IMR-90 (cell line): ENCODE measurements at regions of chr1 and their contacts with region 1.

Region 1: DNA sequence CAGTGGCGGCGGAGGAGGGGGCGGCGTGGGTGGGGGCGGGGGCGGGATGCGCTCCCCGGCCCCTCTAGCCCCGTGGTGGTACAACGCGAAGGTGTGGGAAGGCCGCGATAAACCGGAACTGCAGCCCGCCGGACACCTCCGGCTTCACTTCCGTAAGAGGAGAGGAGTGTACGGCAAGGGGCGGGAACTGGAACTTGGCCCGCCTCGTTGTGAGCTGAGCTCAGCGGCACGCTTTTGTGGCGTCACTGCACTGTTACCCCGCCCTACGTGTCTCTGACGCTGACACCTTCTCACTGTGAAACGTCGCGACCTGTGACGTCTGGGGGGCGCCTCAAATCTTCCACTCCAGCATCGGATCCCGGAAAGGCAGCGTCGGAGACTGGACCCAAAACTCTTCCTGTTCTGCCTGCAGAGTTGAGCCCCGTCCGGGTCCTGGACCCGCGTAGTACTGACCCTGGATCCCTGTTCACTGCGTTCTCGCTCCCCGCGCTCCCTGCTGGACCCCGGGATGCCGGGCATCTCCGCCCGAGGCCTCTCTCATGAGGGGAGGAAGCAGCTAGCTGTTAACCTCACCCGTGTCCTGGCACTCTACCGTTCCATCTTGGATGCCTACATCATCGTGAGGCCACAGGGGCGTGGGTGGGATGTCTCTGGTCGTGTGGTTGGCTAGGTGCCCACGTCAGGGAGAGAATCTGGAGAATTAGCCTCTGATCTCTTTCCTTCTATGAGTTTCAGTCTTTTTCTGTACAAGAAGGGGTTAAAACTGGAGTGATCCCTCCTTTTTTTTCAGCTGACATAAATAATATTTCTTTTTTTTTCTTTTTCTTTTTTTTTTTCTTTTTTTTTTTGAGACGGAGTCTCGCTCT is at the start of gene ISG20L2:
- DNase-seq: peak; percentile 99
- ATAC-seq: peak; percentile 92
- H3K4me3 ChIP-seq: peak within 1 kb of the TSS; percentile 60
- H3K27ac ChIP-seq: peak within 1 kb of the TSS; percentile 94
- H3K4me1 ChIP-seq: peaks cover 8% of the 10 kb centered on the region
- H3K27me3 ChIP-seq: no peaks in the 10 kb centered on the region
- CTCF ChIP-seq: no peak
- POLR2A ChIP-seq: peak; percentile 89
- RAD21 ChIP-seq: no peak
- total RNA-seq, gene ISG20L2: 13.6 and 17.0 TPM in 2 replicates

Region 2: GRCh38 chr1:156677616-156678596 is 50.9 kb before region 1 on chr1:
- CTCF ChIA-PET with region 1: interaction called, 13 read pairs
- POLR2A ChIA-PET with region 1: interaction called, 3 read pairs
- dilution Hi-C with region 1: no loop called
- in situ Hi-C with region 1: no loop called
- intact Hi-C with region 1: no loop called
- DNase-seq: peak; percentile 89
- ATAC-seq: peak; percentile 45
- H3K4me3 ChIP-seq: peak overlapping the region; percentile 25; the same call in 1 of the 2 replicates
- H3K27ac ChIP-seq: peak overlapping the region; percentile 70
- H3K4me1 ChIP-seq: peaks cover 31% of the 10 kb centered on the region
- H3K27me3 ChIP-seq: peaks cover 23% of the 10 kb centered on the region
- CTCF ChIP-seq: peak; percentile 98
- POLR2A ChIP-seq: 0 out of 2 replicates have a peak, but pooled peaks have one; percentile 41
- RAD21 ChIP-seq: peak; percentile 96

Region 3: DNA sequence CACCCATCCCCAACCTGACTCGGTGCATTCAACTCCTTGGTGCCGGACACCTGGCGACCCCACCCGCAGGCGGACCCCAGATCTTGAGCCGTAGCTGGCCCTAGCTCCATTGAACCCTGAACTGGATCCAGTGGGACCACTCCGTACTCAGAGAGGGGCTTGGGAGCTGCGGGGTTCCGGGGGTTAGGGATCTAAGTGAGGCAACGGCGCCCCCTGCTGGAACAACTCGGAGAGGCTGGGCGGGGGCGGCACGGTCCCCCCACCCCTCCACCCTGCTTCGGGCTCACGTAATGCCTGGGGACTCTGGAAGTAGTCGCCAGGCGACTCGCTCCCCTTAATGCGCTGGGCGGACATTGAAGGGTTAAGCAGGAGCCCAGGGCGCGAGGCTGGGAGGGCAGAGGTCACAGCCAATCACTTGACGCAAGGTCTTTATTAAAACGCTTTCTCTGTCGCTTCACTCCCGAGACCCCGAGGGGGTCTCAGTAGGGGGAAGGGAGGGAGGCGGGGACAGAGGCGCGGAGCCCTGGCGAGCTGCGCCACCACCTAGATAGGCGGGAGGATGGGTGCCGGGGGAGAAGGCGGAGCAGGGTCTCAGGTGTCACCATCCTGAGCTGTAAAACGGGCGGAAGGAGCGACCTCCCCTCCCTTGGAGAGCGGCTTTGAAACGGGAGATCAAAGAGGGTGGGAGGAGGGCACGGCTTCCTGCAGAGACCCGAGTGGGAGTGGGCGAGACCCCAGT is 22.7 kb before region 1 on chr1:
- CTCF ChIA-PET with region 1: interaction called, 8 read pairs
- POLR2A ChIA-PET with region 1: no interaction called
- dilution Hi-C with region 1: no loop called
- in situ Hi-C with region 1: no loop called
- intact Hi-C with region 1: loop called (anchors 2 kb)
- DNase-seq: peak; percentile 34
- ATAC-seq: peak; percentile 24
- H3K4me3 ChIP-seq: peak overlapping the region; percentile 15; the same call in 1 of the 2 replicates
- H3K27ac ChIP-seq: peak overlapping the region; percentile 10; the same call in 1 of the 2 replicates
- H3K4me1 ChIP-seq: peaks cover 48% of the 10 kb centered on the region
- H3K27me3 ChIP-seq: peaks cover 5% of the 10 kb centered on the region
- CTCF ChIP-seq: peak; percentile 69
- POLR2A ChIP-seq: no peak
- RAD21 ChIP-seq: peak; percentile 61

Region 4: DNA sequence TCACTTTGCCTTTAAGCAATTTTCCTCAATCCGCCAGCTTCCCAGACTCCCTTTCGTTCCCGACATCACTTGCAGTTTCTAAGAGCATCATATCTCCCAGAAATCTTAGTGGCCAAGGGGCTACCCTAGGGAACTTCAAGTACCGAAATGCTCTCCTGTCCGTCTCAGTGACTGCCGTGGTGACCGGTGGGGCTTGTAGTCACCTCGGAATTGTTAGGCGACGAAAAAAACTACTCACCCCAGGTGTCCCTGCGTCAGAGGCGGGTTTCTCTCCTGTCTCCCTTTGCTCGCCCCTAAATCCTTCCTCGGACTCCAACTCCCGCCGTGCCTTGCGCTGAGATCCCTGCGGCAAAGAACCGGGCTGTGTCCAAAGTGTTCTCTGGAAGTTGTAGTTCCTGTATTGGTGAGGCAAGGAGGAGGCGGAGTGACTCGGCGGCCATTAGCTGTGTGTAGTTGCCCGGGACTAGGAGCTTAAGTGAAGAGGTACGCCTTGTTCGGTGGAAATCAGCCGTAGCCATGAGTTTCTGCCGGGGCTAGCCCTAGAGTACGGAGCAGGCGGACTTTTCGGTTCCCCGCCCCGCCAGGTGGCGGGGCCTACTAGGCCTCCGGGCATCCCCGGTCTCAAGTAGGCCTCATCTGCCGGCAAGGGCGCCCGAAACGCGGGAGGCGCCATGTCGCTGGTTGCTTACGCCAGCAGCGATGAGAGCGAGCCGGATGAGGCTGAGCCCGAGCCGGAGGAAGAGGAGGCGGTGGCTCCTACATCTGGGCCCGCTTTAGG is 38.5 kb after region 1 on chr1 and contains the start of gene PRCC:
- CTCF ChIA-PET with region 1: interaction called, 8 read pairs
- POLR2A ChIA-PET with region 1: no interaction called
- dilution Hi-C with region 1: no loop called
- in situ Hi-C with region 1: no loop called
- intact Hi-C with region 1: loop called (anchors 2 kb)
- DNase-seq: peak; percentile 100
- ATAC-seq: peak; percentile 94
- H3K4me3 ChIP-seq: peak within 1 kb of the TSS; percentile 71
- H3K27ac ChIP-seq: peak within 1 kb of the TSS; percentile 78
- H3K4me1 ChIP-seq: peaks cover 5% of the 10 kb centered on the region
- H3K27me3 ChIP-seq: no peaks in the 10 kb centered on the region
- CTCF ChIP-seq: no peak
- POLR2A ChIP-seq: peak; percentile 71; the same call in 1 of the 2 replicates
- RAD21 ChIP-seq: no peak
- total RNA-seq, gene PRCC: 10.6 and 14.7 TPM in 2 replicates

Region 5: GRCh38 chr1:156860113-156860627 is 131.3 kb after region 1 on chr1:
- CTCF ChIA-PET with region 1: interaction called, 28 read pairs
- POLR2A ChIA-PET with region 1: no interaction called
- dilution Hi-C with region 1: no loop called
- in situ Hi-C with region 1: no loop called
- intact Hi-C with region 1: loop called (anchors 1 kb)
- DNase-seq: peak; percentile 21
- ATAC-seq: peak; percentile 86
- H3K4me3 ChIP-seq: peak overlapping the region; percentile 13; the same call in 1 of the 2 replicates
- H3K27ac ChIP-seq: no peak overlapping the region
- H3K4me1 ChIP-seq: peaks cover 4% of the 10 kb centered on the region; the same call in 1 of the 2 replicates
- H3K27me3 ChIP-seq: peaks cover 88% of the 10 kb centered on the region
- CTCF ChIP-seq: peak; percentile 67
- POLR2A ChIP-seq: no peak
- RAD21 ChIP-seq: peak; percentile 80

Region 6: DNA sequence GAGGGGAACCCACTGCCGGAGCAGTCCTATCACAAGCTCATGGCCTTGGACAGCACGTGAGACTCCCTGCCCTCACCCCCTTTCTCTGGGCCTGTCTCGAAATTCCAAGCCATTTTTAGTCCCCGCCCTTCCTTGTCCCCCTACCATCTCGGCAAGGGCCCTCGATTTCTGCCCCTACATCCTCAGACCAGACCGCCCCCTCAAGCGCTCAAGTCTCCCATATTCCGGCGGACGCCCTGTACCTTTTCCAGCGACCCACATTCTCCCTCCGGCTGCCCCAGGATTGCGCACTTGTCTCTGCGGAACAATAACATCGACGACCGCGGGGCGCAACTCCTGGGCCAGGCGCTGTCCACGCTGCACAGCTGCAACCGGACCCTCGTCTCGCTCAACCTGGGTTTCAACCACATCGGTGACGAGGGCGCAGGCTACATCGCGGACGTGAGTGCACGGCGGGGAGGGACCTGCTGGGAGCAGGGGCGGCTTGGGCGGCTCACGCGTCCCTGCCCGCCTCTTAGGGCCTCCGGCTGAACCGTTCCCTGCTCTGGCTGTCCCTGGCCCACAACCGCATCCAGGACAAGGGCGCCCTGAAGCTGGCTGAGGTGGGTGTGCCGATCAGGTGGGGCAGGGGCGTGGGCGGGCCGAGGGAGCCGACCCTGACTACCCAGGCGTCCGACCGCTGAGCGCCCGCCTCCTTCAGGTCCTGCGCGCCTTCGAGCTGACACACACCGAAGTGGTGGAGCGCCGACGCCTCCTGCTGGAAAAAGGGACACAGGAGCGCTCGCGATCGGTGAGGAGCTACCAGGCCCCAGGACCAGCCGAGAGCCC is 198.6 kb after region 1 on chr1:
- CTCF ChIA-PET with region 1: interaction called, 9 read pairs
- POLR2A ChIA-PET with region 1: interaction called, 3 read pairs
- dilution Hi-C with region 1: no loop called
- in situ Hi-C with region 1: no loop called
- intact Hi-C with region 1: loop called (anchors 10 kb)
- DNase-seq: peak; percentile 64
- ATAC-seq: peak; percentile 87
- H3K4me3 ChIP-seq: peak overlapping the region; percentile 39
- H3K27ac ChIP-seq: no peak overlapping the region
- H3K4me1 ChIP-seq: no peaks in the 10 kb centered on the region
- H3K27me3 ChIP-seq: peaks cover 42% of the 10 kb centered on the region
- CTCF ChIP-seq: peak; percentile 88
- POLR2A ChIP-seq: no peak
- RAD21 ChIP-seq: peak; percentile 86